Right ventricle myocardium inferior (tissue), 1 donor: ENCODE measurements at regions of chr18 and their contacts with region 1.

Region 1: GRCh38 chr18:35240664-35241447 is at the start of gene ZNF397:
- DNase-seq: peak; percentile 99
- ATAC-seq: peak; percentile 100
- total RNA-seq, gene ZNF397: 15.5 TPM

Region 2: GRCh38 chr18:35029770-35030169 is 211.1 kb before region 1 on chr18:
- intact Hi-C with region 1: loop called (anchors 5 kb)
- DNase-seq: no peak
- ATAC-seq: no peak

Region 3: GRCh38 chr18:35290073-35290735 is 49.3 kb after region 1 on chr18 and contains the start of gene ZSCAN30:
- intact Hi-C with region 1: loop called (anchors 1 kb)
- DNase-seq: peak; percentile 95
- ATAC-seq: peak; percentile 99
- total RNA-seq, gene ZSCAN30: 9.5 TPM

Region 4: GRCh38 chr18:35343936-35344735 is 103.3 kb after region 1 on chr18 and contains the start of gene ZNF24:
- intact Hi-C with region 1: loop called (anchors 2 kb)
- DNase-seq: peak; percentile 99
- ATAC-seq: peak; percentile 99
- total RNA-seq, gene ZNF24: 50.2 TPM